Caco-2 (cell line): ENCODE measurements at regions of chr11 and their contacts with region 1.

Region 1: DNA sequence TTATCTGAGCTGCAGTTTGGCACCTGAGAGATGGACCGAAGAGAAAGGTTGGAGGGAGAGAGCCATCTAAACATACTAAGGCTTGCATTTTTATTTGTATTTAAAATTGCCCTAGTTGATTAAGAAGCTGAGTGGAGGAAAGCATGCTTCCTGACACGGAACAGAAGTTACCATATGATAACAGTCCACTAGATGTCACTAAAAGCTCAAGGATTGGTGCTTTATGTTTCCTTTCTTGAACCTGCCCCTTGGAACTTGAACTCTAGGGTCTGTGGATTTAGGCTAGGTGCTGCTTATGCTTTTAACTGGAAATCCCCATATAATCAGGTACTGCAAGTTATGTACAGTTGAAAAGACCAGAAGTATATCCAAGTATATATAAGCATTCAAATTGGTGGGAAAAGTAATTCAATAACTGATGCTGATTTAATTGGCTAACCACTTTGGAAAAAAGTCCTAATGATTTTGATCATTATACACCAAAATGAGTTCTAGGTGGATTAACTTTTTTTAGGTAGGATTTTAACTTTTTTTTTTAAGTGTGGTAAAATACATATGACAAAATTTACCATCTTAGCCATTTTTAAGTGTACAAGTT is 9.5 kb downstream of the RBMXL2 start:
- DNase-seq: peak in 1 of 2 experiments; percentile 54
- H3K4me3 ChIP-seq: no peak overlapping the region
- H3K4me3 Mint-ChIP-seq: no peak overlapping the region
- H3K27ac Mint-ChIP-seq: no peak overlapping the region
- H3K4me1 ChIP-seq: no peaks in the 10 kb centered on the region
- H3K4me1 Mint-ChIP-seq: no peaks in the 10 kb centered on the region
- H3K27me3 ChIP-seq: no peaks in the 10 kb centered on the region
- H3K27me3 Mint-ChIP-seq: peaks cover 3% of the 10 kb centered on the region
- CTCF ChIP-seq: peak; percentile 55 to 62

Region 2: GRCh38 chr11:7034019-7034418 is 64.3 kb before region 1 on chr11:
- CTCF ChIA-PET with region 1: no interaction called
- POLR2A ChIA-PET with region 1: no interaction called
- intact Hi-C with region 1: no loop called
- DNase-seq: no peak
- H3K4me3 ChIP-seq: no peak overlapping the region
- H3K4me3 Mint-ChIP-seq: no peak overlapping the region
- H3K27ac Mint-ChIP-seq: no peak overlapping the region
- H3K4me1 ChIP-seq: no peaks in the 10 kb centered on the region
- H3K4me1 Mint-ChIP-seq: no peaks in the 10 kb centered on the region
- H3K27me3 ChIP-seq: no peaks in the 10 kb centered on the region; the same call in 1 of the 2 replicates
- H3K27me3 Mint-ChIP-seq: peaks cover 4% of the 10 kb centered on the region
- CTCF ChIP-seq: no peak

Region 3: GRCh38 chr11:7278314-7278917 is 180.1 kb after region 1 on chr11:
- CTCF ChIA-PET with region 1: interaction called, 14 read pairs
- POLR2A ChIA-PET with region 1: no interaction called
- intact Hi-C with region 1: loop called (anchors 1 kb)
- DNase-seq: peak in 1 of 2 experiments; percentile 42
- H3K4me3 ChIP-seq: no peak overlapping the region
- H3K4me3 Mint-ChIP-seq: no peak overlapping the region
- H3K27ac Mint-ChIP-seq: no peak overlapping the region
- H3K4me1 ChIP-seq: no peaks in the 10 kb centered on the region
- H3K4me1 Mint-ChIP-seq: no peaks in the 10 kb centered on the region
- H3K27me3 ChIP-seq: no peaks in the 10 kb centered on the region
- H3K27me3 Mint-ChIP-seq: no peaks in the 10 kb centered on the region
- CTCF ChIP-seq: peak; percentile 67 to 74

Region 4: GRCh38 chr11:7442588-7443215 is 344.4 kb after region 1 on chr11:
- CTCF ChIA-PET with region 1: interaction called, 14 read pairs
- POLR2A ChIA-PET with region 1: no interaction called
- intact Hi-C with region 1: loop called (anchors 1 kb)
- DNase-seq: peak; percentile 64 to 83
- H3K4me3 ChIP-seq: no peak overlapping the region
- H3K4me3 Mint-ChIP-seq: no peak overlapping the region
- H3K27ac Mint-ChIP-seq: no peak overlapping the region
- H3K4me1 ChIP-seq: no peaks in the 10 kb centered on the region
- H3K4me1 Mint-ChIP-seq: no peaks in the 10 kb centered on the region
- H3K27me3 ChIP-seq: no peaks in the 10 kb centered on the region
- H3K27me3 Mint-ChIP-seq: peaks cover 21% of the 10 kb centered on the region
- CTCF ChIP-seq: peak; percentile 82 to 96

Region 5: DNA sequence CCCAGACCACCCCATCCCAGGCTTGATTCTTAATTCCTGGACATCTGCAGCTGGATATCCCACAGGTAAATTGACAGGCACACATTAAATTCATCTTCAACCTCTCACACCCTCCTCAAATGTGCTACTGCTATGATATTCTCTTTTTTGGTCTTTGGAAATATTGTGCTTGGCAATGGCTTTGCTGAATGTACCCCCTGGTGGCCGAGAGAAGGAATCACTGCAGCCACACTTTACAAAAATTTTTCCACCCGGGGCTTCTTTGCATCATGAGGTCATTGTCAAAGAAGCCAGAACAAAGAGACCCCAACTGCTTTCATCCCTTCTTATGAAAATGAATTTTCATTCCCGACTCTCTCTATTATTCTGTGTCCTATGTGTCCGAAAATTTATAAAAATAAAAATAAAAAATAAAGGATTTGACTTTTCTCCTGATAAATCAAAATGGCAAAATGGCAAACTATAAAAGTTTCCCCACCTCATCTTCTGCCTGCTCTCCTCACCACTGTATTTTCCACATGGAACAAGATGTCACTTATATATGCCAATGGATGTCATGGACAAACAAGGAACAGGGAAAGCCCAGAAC is 590.0 kb after region 1 on chr11:
- CTCF ChIA-PET with region 1: no interaction called
- POLR2A ChIA-PET with region 1: no interaction called
- intact Hi-C with region 1: loop called (anchors 1 kb)
- DNase-seq: peak in 1 of 2 experiments; percentile 49
- H3K4me3 ChIP-seq: no peak overlapping the region
- H3K4me3 Mint-ChIP-seq: no peak overlapping the region
- H3K27ac Mint-ChIP-seq: no peak overlapping the region
- H3K4me1 ChIP-seq: peaks cover 15% of the 10 kb centered on the region
- H3K4me1 Mint-ChIP-seq: peaks cover 20% of the 10 kb centered on the region
- H3K27me3 ChIP-seq: no peaks in the 10 kb centered on the region
- H3K27me3 Mint-ChIP-seq: no peaks in the 10 kb centered on the region
- CTCF ChIP-seq: peak; percentile 83 to 91

Region 6: GRCh38 chr11:8099291-8099899 is 1001.1 kb after region 1 on chr11:
- CTCF ChIA-PET with region 1: interaction called, 6 read pairs
- POLR2A ChIA-PET with region 1: no interaction called
- intact Hi-C with region 1: loop called (anchors 10 kb)
- DNase-seq: peak; percentile 78 to 80
- H3K4me3 ChIP-seq: no peak overlapping the region
- H3K4me3 Mint-ChIP-seq: no peak overlapping the region
- H3K27ac Mint-ChIP-seq: no peak overlapping the region
- H3K4me1 ChIP-seq: no peaks in the 10 kb centered on the region
- H3K4me1 Mint-ChIP-seq: no peaks in the 10 kb centered on the region
- H3K27me3 ChIP-seq: no peaks in the 10 kb centered on the region
- H3K27me3 Mint-ChIP-seq: peaks cover 9% of the 10 kb centered on the region
- CTCF ChIP-seq: peak; percentile 79 to 88